Activated CD4-positive, alpha-beta T cell treated with anti-CD3 and anti-CD28 coated beads for 36 hours (primary cell): ENCODE measurements at regions of chr15 and their contacts with region 1.

Region 1: GRCh38 chr15:64162870-64163658 is at the start of gene PPIB:
- DNase-seq: peak; percentile 99
- ATAC-seq: peak; percentile 94
- H3K4me3 Mint-ChIP-seq: peak within 1 kb of the TSS; percentile 86
- H3K27ac Mint-ChIP-seq: peak within 1 kb of the TSS; percentile 100
- H3K4me1 Mint-ChIP-seq: peaks cover 47% of the 10 kb centered on the region
- H3K27me3 Mint-ChIP-seq: no peaks in the 10 kb centered on the region
- total RNA-seq, gene PPIB: 221 to 233 TPM

Region 2: DNA sequence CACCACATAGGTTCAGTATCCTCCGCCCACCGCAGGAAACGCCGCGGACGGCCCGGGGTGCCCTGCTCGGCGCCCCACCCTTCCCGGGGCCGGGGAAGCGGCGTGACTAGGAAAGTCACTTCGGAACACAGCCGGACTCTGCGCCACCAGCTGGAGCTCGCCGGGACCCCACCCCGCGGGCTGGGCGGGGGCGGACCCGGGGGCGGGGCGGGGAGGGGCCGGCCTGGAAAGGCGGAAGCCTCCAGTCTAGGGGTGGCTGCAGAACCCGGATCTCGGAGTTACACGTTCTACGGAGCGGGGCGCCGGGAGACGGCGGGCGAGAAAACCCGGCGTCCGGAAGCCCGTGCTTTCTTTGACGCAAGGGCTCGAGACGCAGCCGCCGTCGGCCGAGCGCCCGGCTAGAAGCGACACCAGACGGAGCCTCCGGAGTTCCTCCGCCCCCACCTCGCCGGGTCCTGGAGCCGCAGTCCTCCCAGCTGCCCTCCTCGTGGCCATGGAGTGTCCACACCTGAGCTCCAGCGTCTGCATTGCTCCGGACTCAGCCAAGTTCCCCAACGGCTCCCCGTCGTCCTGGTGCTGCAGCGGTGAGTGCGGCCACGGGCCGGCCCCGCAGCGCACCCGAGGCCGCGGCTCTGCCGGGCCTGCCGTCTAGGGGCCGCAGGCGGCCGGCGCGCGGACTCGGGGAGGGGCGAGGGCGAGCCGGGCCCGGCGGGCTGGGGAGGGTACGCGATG is 658.7 kb before region 1 on chr15 and contains the start of gene USP3:
- CTCF ChIA-PET with region 1: no interaction called
- POLR2A ChIA-PET with region 1: no interaction called
- intact Hi-C with region 1: loop called in 1 of 2 experiments (anchors 1 kb)
- DNase-seq: peak; percentile 96
- ATAC-seq: peak; percentile 53
- H3K4me3 Mint-ChIP-seq: peak within 1 kb of the TSS; percentile 94
- H3K27ac Mint-ChIP-seq: peak within 1 kb of the TSS; percentile 97
- H3K4me1 Mint-ChIP-seq: peaks cover 74% of the 10 kb centered on the region
- H3K27me3 Mint-ChIP-seq: no peaks in the 10 kb centered on the region
- total RNA-seq, gene USP3: 51.1 to 51.7 TPM

Region 3: DNA sequence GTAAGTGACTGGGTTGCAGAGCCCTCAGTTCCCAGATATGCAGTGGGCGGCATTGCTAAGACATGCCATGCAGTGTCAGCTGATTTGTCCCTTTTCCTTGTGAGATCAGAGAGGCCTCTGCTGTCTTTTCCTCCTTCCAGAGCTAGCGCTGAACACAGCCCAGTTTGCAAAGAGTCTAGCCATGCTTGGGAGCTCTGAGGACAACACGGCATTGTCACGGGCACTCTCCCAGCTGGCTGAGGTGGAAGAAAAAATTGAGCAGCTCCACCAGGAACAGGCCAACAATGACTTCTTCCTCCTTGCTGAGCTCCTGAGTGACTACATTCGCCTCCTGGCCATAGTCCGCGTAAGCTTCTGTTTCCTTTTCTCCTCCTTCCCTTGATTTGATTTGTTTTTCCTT is 31.5 kb before region 1 on chr15:
- CTCF ChIA-PET with region 1: no interaction called
- POLR2A ChIA-PET with region 1: no interaction called
- intact Hi-C with region 1: no loop called
- DNase-seq: no peak
- ATAC-seq: no peak
- H3K4me3 Mint-ChIP-seq: no peak overlapping the region
- H3K27ac Mint-ChIP-seq: no peak overlapping the region
- H3K4me1 Mint-ChIP-seq: no peaks in the 10 kb centered on the region
- H3K27me3 Mint-ChIP-seq: no peaks in the 10 kb centered on the region

Region 4: DNA sequence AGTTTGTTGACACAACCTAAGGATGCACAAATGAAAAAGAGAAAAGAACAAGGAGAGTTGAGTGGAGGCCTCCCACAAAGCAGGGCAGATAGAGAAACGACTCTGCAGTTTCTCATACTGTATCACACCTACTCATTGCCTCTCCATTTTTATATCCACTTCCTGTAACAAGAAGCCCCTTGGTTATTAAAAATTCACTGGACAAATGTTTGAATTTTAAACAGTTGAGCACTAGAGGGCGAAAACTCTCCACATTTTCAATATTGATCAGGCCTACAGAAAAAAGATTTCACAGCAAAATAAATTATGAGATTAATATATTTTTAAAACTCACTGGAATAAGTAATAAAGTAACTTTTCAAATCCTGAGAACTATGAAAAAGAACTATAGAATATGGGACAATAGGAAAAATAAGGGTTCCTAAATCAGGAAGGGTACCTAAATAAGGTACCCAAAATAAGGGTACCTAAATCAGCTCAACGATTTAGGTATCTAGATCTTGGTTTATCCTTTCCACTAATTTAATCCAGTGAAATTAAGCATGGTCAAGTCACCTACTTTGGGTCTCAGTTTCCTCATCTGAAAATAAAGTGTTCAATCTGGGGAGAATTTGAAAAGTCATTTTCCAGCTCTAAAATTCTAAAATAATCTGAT is 46.7 kb after region 1 on chr15:
- CTCF ChIA-PET with region 1: no interaction called
- POLR2A ChIA-PET with region 1: no interaction called
- intact Hi-C with region 1: loop called in 1 of 2 experiments (anchors 1 kb)
- DNase-seq: no peak
- ATAC-seq: peak; percentile 60
- H3K4me3 Mint-ChIP-seq: no peak overlapping the region
- H3K27ac Mint-ChIP-seq: no peak overlapping the region
- H3K4me1 Mint-ChIP-seq: peaks cover 7% of the 10 kb centered on the region
- H3K27me3 Mint-ChIP-seq: no peaks in the 10 kb centered on the region

Region 5: GRCh38 chr15:64387562-64388168 is 224.6 kb after region 1 on chr15 and contains the start of gene TRIP4:
- CTCF ChIA-PET with region 1: interaction called, 4 read pairs
- POLR2A ChIA-PET with region 1: interaction called, 4 read pairs
- intact Hi-C with region 1: loop called in 1 of 2 experiments (anchors 1 kb)
- DNase-seq: peak; percentile 98
- ATAC-seq: peak; percentile 100
- H3K4me3 Mint-ChIP-seq: peak within 1 kb of the TSS; percentile 85
- H3K27ac Mint-ChIP-seq: peak within 1 kb of the TSS; percentile 91
- H3K4me1 Mint-ChIP-seq: peaks cover 17% of the 10 kb centered on the region
- H3K27me3 Mint-ChIP-seq: no peaks in the 10 kb centered on the region
- total RNA-seq, gene TRIP4: 13.1 to 19.6 TPM

Region 6: GRCh38 chr15:64731012-64731806 is 568.1 kb after region 1 on chr15:
- CTCF ChIA-PET with region 1: no interaction called
- POLR2A ChIA-PET with region 1: no interaction called
- intact Hi-C with region 1: loop called in 1 of 2 experiments (anchors 5 kb)
- DNase-seq: peak; percentile 93
- ATAC-seq: peak; percentile 84
- H3K4me3 Mint-ChIP-seq: no peak overlapping the region
- H3K27ac Mint-ChIP-seq: no peak overlapping the region
- H3K4me1 Mint-ChIP-seq: peaks cover 4% of the 10 kb centered on the region
- H3K27me3 Mint-ChIP-seq: peaks cover 2% of the 10 kb centered on the region

Region 7: DNA sequence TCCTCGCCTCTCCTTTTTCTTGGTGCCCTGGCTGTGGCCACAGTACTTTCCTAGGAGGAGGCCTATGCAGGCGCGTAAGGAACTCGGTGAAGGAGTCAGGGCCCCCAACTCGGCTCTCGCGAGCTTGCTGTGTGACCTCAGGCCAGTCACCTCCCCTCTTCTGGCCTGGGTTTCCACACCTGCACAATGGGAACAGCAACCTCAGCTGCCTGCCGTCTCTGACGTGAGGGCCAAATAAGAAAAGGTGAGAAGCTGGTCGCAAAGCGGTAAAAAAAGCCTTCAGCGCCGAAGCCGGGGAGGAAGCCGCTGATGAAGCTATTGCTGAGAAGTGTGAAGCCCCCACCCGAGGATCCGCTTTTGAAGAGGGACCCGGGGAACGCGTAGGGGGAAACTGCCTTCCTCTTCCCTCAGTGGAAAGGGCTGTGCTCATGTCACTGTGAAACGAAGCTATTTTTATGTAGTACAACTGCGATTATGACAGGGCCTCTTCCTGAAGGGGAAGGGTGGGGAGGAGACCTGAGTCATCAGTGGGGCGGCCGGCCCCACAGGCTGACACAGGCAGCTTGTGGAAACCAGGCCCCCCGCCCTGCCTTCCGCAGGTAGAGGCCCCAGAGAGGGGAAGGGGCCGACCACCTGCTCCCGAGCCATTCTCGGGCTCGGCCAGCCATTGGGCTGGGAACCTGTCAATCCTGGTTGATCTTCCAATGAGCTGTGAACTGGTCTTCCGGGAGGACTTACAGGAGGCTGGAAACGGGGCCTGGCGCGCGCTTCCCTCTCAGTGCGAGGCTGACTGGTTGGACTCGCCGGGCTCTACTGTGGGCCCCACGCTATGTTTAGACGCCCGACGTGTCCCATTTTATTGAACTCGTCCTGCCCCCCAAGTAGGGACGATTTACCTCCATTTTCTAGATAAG is 730.7 kb after region 1 on chr15:
- CTCF ChIA-PET with region 1: no interaction called
- POLR2A ChIA-PET with region 1: no interaction called
- intact Hi-C with region 1: loop called in 1 of 2 experiments (anchors 1 kb)
- DNase-seq: peak; percentile 99
- ATAC-seq: peak; percentile 84
- H3K4me3 Mint-ChIP-seq: peak overlapping the region; percentile 94
- H3K27ac Mint-ChIP-seq: peak overlapping the region; percentile 93
- H3K4me1 Mint-ChIP-seq: peaks cover 54% of the 10 kb centered on the region
- H3K27me3 Mint-ChIP-seq: no peaks in the 10 kb centered on the region

Region 8: GRCh38 chr15:65298731-65299130 is 1135.7 kb after region 1 on chr15:
- CTCF ChIA-PET with region 1: no interaction called
- POLR2A ChIA-PET with region 1: no interaction called
- intact Hi-C with region 1: loop called in 1 of 2 experiments (anchors 5 kb)
- DNase-seq: peak; percentile 21
- ATAC-seq: no peak
- H3K4me3 Mint-ChIP-seq: peak overlapping the region; percentile 81
- H3K27ac Mint-ChIP-seq: peak overlapping the region; percentile 97
- H3K4me1 Mint-ChIP-seq: peaks cover 49% of the 10 kb centered on the region
- H3K27me3 Mint-ChIP-seq: no peaks in the 10 kb centered on the region